ENCODE measurements at regions of chr7 and their contacts with region 1.

Region 1: GRCh38 chr7:144835652-144836544 is at the start of gene TPK1:
- DNase-seq: peak; percentile 90
- H3K4me3 Mint-ChIP-seq: peak within 1 kb of the TSS; percentile 92
- H3K27ac Mint-ChIP-seq: peak within 1 kb of the TSS; percentile 99
- H3K4me1 Mint-ChIP-seq: peaks cover 39% of the 10 kb centered on the region
- H3K27me3 Mint-ChIP-seq: no peaks in the 10 kb centered on the region
- total RNA-seq, gene TPK1: 26.4 to 28.6 TPM

Region 2: DNA sequence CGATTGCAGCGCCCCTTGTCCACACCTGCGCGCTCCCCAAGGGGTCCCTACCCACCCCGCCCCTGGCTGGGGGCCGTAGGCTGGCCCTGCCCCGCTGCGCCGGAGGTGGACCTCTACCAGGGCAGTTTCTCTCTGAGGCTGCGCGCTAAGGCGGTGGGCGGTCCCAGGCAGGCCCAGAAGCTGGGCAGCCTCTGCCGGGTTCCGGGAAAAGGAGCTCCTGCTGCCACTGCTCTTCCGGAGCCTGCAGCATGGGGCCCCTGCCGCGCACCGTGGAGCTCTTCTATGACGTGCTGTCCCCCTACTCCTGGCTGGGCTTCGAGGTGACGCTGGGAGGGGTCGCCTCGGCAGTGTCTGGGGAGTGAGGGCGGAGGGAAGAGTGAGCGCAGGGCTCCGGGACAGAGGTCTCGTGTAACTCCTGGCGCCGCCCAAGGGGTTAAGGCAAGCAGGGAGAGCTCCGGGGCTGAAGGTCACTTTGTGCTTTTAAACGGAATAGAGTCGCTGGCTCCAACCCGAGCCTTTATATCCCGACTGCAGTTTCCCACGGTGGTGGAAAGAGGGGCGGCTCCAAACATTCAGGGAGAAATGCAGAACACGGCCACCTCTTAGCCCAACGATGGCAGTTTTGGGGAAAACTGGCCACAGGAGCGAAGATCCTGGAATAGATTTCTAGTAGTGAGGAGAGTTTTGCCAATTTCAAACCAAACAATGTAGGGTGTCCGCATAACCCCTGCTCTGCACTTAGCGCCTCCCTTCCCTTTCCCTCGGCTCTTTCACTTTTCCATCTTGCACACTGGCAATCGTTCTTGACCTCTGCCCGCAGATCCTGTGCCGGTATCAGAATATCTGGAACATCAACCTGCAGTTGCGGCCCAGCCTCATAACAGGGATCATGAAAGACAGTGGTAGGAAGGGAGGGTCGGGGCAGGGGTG is 1572.4 kb before region 1 on chr7 and contains the start of gene GSTK1:
- CTCF ChIA-PET with region 1: no interaction called
- intact Hi-C with region 1: loop called (anchors 10 kb)
- DNase-seq: peak; percentile 90
- H3K4me3 Mint-ChIP-seq: peak within 1 kb of the TSS; percentile 96
- H3K27ac Mint-ChIP-seq: peak within 1 kb of the TSS; percentile 96
- H3K4me1 Mint-ChIP-seq: peaks cover 55% of the 10 kb centered on the region
- H3K27me3 Mint-ChIP-seq: no peaks in the 10 kb centered on the region
- total RNA-seq, gene GSTK1: 186 to 187 TPM

Region 3: DNA sequence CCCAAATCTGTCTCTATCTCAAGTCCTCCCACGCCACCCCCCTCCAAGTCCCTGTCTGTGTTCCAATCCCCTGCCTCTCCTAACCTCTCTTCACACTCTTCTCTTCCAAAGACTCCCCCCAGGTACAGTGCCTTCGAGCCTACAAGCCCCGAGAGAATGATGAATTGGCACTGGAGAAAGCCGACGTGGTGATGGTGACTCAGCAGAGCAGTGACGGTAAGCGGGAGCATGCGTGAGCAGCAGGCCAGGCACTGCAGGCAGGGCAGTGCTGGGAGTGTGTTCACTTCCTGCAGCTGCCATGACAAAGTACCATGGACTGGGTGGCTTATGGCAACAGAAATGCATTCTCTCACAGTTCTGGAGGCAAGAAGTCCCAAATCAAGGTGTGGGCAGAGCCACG is 457.2 kb before region 1 on chr7:
- CTCF ChIA-PET with region 1: no interaction called
- intact Hi-C with region 1: no loop called
- DNase-seq: no peak
- H3K4me3 Mint-ChIP-seq: no peak overlapping the region
- H3K27ac Mint-ChIP-seq: no peak overlapping the region
- H3K4me1 Mint-ChIP-seq: no peaks in the 10 kb centered on the region
- H3K27me3 Mint-ChIP-seq: no peaks in the 10 kb centered on the region

Region 4: DNA sequence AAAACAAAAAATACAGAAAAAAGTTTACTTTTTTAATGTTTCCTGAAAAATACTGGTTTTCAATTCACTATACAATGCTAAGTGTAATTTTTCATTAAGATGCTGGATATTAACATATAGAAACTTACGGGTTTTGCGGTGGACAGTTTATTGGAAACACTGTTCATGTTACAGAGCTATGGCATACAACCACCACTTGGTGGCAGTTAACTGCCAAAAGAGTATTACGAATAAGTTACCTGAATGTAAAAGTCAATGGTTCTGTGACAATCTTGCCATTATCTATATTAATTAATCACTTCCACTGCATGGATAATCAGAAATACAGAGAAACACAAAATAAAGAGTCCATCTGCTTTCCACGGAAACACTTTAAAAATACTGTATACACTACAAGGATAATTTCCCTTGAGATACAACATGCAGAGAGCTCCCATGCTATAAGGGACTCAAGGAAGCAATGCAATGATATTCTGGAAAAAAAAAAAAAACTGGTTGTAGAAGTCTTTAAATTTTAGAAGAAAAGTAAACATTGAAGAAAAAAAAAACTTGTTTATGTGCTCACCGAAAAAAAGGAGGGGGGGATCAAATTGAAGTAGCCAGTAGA is 97.1 kb before region 1 on chr7:
- CTCF ChIA-PET with region 1: interaction called, 15 read pairs
- intact Hi-C with region 1: loop called (anchors 1 kb)
- DNase-seq: peak; percentile 35
- H3K4me3 Mint-ChIP-seq: no peak overlapping the region
- H3K27ac Mint-ChIP-seq: no peak overlapping the region
- H3K4me1 Mint-ChIP-seq: peaks cover 7% of the 10 kb centered on the region
- H3K27me3 Mint-ChIP-seq: no peaks in the 10 kb centered on the region

Region 5: GRCh38 chr7:144805627-144806239 is 30.2 kb before region 1 on chr7:
- CTCF ChIA-PET with region 1: interaction called, 3 read pairs
- intact Hi-C with region 1: loop called (anchors 1 kb)
- DNase-seq: no peak
- H3K4me3 Mint-ChIP-seq: no peak overlapping the region
- H3K27ac Mint-ChIP-seq: no peak overlapping the region
- H3K4me1 Mint-ChIP-seq: peaks cover 63% of the 10 kb centered on the region
- H3K27me3 Mint-ChIP-seq: no peaks in the 10 kb centered on the region

Region 6: GRCh38 chr7:144818511-144818910 is 17.4 kb before region 1 on chr7:
- CTCF ChIA-PET with region 1: interaction called, 30 read pairs
- intact Hi-C with region 1: loop called (anchors 1 kb)
- DNase-seq: peak; percentile 80
- H3K4me3 Mint-ChIP-seq: peak overlapping the region; percentile 35
- H3K27ac Mint-ChIP-seq: peak overlapping the region; percentile 94
- H3K4me1 Mint-ChIP-seq: peaks cover 76% of the 10 kb centered on the region
- H3K27me3 Mint-ChIP-seq: no peaks in the 10 kb centered on the region